ENCODE measurements at regions of chr10 and their contacts with region 1.

Region 1: GRCh38 chr10:6542999-6543430 is 37.1 kb downstream of the PRKCQ start:
- DNase-seq: peak; percentile 65
- H3K4me3 Mint-ChIP-seq: peak overlapping the region; percentile 90
- H3K27ac Mint-ChIP-seq: peak overlapping the region; percentile 99
- H3K4me1 Mint-ChIP-seq: peaks cover 73% of the 10 kb centered on the region
- H3K27me3 Mint-ChIP-seq: no peaks in the 10 kb centered on the region

Region 2: GRCh38 chr10:6144406-6145165 is 398.4 kb before region 1 on chr10:
- CTCF ChIA-PET with region 1: no interaction called
- POLR2A ChIA-PET with region 1: no interaction called
- intact Hi-C with region 1: no loop called
- DNase-seq: peak; percentile 93
- H3K4me3 Mint-ChIP-seq: peak overlapping the region; percentile 80
- H3K27ac Mint-ChIP-seq: peak overlapping the region; percentile 83
- H3K4me1 Mint-ChIP-seq: peaks cover 84% of the 10 kb centered on the region
- H3K27me3 Mint-ChIP-seq: peaks cover 1% of the 10 kb centered on the region

Region 3: DNA sequence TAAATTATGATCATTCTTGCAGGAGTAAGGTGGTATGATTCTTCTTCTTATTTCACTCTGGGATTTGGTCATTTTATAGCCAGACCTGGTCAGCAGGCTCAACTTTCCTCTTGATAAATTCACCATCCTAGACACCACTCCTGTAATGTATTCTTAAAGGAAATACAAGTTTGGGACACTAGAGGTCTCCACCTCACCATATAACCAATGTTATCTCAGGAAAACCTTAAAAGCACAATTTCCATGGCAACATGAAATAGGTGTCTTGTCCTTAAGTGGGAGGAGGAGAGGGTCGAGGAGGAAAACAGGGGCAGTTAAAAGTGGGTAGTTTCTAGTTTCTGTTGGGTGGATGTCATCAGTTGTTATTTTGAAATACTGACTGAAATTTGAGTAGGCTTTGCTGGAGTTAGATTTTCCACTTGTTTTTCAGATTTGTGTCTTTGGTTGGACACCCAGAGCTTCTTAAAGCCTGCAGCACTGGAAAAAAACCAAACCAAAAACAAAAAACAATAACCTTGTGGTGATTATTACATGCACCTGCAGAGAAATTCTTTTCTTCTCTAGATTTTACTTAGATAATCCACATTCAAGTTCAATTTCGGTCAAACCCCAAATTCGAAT is 126.0 kb before region 1 on chr10:
- CTCF ChIA-PET with region 1: no interaction called
- POLR2A ChIA-PET with region 1: no interaction called
- intact Hi-C with region 1: loop called (anchors 5 kb)
- DNase-seq: no peak
- H3K4me3 Mint-ChIP-seq: no peak overlapping the region
- H3K27ac Mint-ChIP-seq: no peak overlapping the region
- H3K4me1 Mint-ChIP-seq: no peaks in the 10 kb centered on the region
- H3K27me3 Mint-ChIP-seq: no peaks in the 10 kb centered on the region

Region 4: GRCh38 chr10:6498771-6499170 is 44.2 kb before region 1 on chr10:
- CTCF ChIA-PET with region 1: interaction called, 5 read pairs
- POLR2A ChIA-PET with region 1: interaction called, 15 read pairs
- intact Hi-C with region 1: loop called (anchors 1 kb)
- DNase-seq: peak; percentile 55
- H3K4me3 Mint-ChIP-seq: peak overlapping the region; percentile 36
- H3K27ac Mint-ChIP-seq: peak overlapping the region; percentile 93
- H3K4me1 Mint-ChIP-seq: peaks cover 53% of the 10 kb centered on the region
- H3K27me3 Mint-ChIP-seq: no peaks in the 10 kb centered on the region

Region 5: GRCh38 chr10:6530211-6530840 is 12.7 kb before region 1 on chr10:
- CTCF ChIA-PET with region 1: interaction called, 16 read pairs
- POLR2A ChIA-PET with region 1: interaction called, 27 read pairs
- intact Hi-C with region 1: loop called (anchors 1 kb)
- DNase-seq: peak; percentile 91
- H3K4me3 Mint-ChIP-seq: peak overlapping the region; percentile 82
- H3K27ac Mint-ChIP-seq: peak overlapping the region; percentile 98
- H3K4me1 Mint-ChIP-seq: peaks cover 88% of the 10 kb centered on the region
- H3K27me3 Mint-ChIP-seq: no peaks in the 10 kb centered on the region

Region 6: DNA sequence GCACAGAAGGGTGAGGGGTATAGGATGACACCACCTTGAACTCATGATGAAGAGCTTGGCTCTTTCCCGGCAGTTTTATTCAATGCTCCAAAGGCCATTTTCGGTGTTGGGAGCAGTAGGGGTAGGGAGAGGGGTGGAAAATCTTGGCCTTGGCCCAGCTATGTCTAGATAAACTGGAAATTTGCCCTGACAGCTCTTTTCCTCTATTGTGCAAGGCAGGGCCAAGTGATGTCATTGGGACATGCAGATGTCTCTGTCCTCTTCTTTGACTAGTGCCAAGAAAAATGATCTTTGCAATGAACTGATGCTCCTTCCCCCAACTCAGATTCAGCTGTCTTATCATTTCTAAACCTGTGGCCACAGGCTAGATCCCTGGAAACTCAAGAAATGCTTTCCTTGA is 64.8 kb after region 1 on chr10:
- CTCF ChIA-PET with region 1: no interaction called
- POLR2A ChIA-PET with region 1: no interaction called
- intact Hi-C with region 1: loop called (anchors 1 kb)
- DNase-seq: no peak
- H3K4me3 Mint-ChIP-seq: peak overlapping the region; percentile 58
- H3K27ac Mint-ChIP-seq: peak overlapping the region; percentile 90
- H3K4me1 Mint-ChIP-seq: peaks cover 62% of the 10 kb centered on the region
- H3K27me3 Mint-ChIP-seq: no peaks in the 10 kb centered on the region

Region 7: DNA sequence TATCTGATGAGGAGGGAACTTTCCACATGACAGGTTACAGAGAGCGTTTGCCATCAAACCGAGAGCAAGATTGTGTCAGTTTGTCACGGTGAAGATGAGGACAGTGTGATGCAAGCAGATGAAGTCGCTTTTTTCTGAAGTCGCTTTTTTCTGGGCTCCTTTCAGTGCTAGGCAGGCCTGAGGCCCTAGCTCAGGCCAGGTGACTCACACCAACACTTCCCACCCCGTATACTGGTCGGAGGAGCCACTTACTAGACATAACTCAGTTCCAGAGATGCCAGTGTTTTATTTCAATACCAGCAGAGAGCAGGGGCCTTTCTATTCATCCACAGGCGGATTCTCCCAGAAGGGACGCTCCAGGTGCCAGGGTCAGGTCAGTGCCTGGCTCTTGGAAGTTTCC is 808.9 kb after region 1 on chr10:
- CTCF ChIA-PET with region 1: no interaction called
- POLR2A ChIA-PET with region 1: no interaction called
- intact Hi-C with region 1: no loop called
- DNase-seq: no peak
- H3K4me3 Mint-ChIP-seq: no peak overlapping the region
- H3K27ac Mint-ChIP-seq: no peak overlapping the region
- H3K4me1 Mint-ChIP-seq: peaks cover 8% of the 10 kb centered on the region
- H3K27me3 Mint-ChIP-seq: no peaks in the 10 kb centered on the region